ENCODE measurements at regions of chr18 and their contacts with region 1.

Region 1: GRCh38 chr18:56235481-56236013 is 402.8 kb downstream of the TXNL1 start:
- DNase-seq: peak; percentile 28
- ATAC-seq: peak; percentile 93
- H3K4me3 Mint-ChIP-seq: peak overlapping the region; percentile 52
- H3K27ac Mint-ChIP-seq: peak overlapping the region; percentile 86
- H3K4me1 Mint-ChIP-seq: peaks cover 39% of the 10 kb centered on the region
- H3K27me3 Mint-ChIP-seq: no peaks in the 10 kb centered on the region
- CTCF ChIP-seq: no peak

Region 2: GRCh38 chr18:56221195-56222065 is 14.1 kb before region 1 on chr18:
- CTCF ChIA-PET with region 1: no interaction called
- POLR2A ChIA-PET with region 1: no interaction called
- intact Hi-C with region 1: no loop called
- DNase-seq: no peak
- ATAC-seq: no peak
- H3K4me3 Mint-ChIP-seq: no peak overlapping the region
- H3K27ac Mint-ChIP-seq: no peak overlapping the region
- H3K4me1 Mint-ChIP-seq: no peaks in the 10 kb centered on the region
- H3K27me3 Mint-ChIP-seq: no peaks in the 10 kb centered on the region
- CTCF ChIP-seq: no peak

Region 3: DNA sequence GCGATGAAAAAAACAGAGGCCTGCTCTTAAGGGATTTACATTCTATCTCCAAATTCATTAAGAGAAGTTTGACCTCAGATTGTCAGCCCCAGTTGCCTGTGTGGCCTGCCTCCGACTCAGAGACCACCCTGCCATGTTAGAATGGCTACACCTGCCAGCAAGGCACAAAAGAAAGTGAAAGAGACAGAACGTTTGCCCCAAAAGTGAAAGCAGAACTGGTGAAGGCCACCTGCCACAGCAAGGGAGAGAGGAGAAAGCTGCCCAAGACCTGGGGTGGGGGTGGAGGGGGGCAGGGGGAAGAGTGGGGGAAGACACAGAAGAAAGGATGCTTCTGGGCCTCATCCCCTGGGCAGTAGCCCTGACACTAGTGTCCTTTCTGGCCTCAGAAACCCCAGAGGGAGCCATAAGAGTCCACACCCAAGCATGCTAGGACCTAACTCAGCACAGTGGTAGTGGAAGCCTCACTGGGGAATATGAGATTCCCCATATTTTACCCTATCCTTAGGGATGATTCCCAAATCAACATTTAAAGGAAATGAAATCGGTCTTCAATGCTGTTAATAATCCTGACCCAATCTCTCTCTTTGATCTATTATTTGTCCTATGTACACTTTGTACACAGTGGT is 13.2 kb after region 1 on chr18:
- CTCF ChIA-PET with region 1: no interaction called
- POLR2A ChIA-PET with region 1: interaction called, 9 read pairs
- intact Hi-C with region 1: loop called (anchors 1 kb)
- DNase-seq: peak; percentile 27
- ATAC-seq: peak; percentile 96
- H3K4me3 Mint-ChIP-seq: peak overlapping the region; percentile 70
- H3K27ac Mint-ChIP-seq: peak overlapping the region; percentile 82
- H3K4me1 Mint-ChIP-seq: peaks cover 51% of the 10 kb centered on the region
- H3K27me3 Mint-ChIP-seq: no peaks in the 10 kb centered on the region
- CTCF ChIP-seq: no peak

Region 4: DNA sequence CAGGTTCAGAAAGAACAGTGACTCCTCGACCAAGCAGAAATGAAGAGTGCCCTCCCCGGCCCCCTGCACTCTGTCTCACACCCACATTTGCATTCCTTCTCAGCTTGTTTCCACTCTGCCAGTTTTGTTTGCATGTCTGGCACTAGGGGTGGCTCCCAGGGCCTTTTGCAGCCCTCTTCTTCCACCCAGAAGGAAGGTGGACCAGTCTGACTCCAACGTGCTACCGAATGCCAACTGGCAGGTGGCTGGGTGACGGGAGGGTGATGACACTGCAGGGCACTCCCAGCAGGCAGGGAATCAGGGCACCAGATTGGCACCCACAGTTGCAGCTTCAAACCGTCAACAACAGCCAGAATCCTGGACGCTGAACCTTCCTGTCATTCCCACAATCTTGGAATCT is 31.8 kb after region 1 on chr18:
- CTCF ChIA-PET with region 1: no interaction called
- POLR2A ChIA-PET with region 1: no interaction called
- intact Hi-C with region 1: loop called (anchors 2 kb)
- DNase-seq: peak; percentile 22
- ATAC-seq: peak; percentile 96
- H3K4me3 Mint-ChIP-seq: peak overlapping the region; percentile 74
- H3K27ac Mint-ChIP-seq: peak overlapping the region; percentile 53
- H3K4me1 Mint-ChIP-seq: peaks cover 45% of the 10 kb centered on the region
- H3K27me3 Mint-ChIP-seq: no peaks in the 10 kb centered on the region
- CTCF ChIP-seq: no peak

Measured in activated B cell treated with CpG ODN at 0.5 μM for 24 hours (primary cell).